Mammary epithelial cell (primary cell): ENCODE measurements at regions of chr4 and their contacts with region 1.

Region 1: GRCh38 chr4:150297861-150298474 is 219.7 kb downstream of the DCLK2 start:
- DNase-seq: peak; percentile 43
- H3K4me3 ChIP-seq: no peak overlapping the region
- H3K27ac ChIP-seq: no peak overlapping the region
- H3K4me1 ChIP-seq: peaks cover 8% of the 10 kb centered on the region
- H3K27me3 ChIP-seq: no peaks in the 10 kb centered on the region
- CTCF ChIP-seq: peak; percentile 45 to 71

Region 2: DNA sequence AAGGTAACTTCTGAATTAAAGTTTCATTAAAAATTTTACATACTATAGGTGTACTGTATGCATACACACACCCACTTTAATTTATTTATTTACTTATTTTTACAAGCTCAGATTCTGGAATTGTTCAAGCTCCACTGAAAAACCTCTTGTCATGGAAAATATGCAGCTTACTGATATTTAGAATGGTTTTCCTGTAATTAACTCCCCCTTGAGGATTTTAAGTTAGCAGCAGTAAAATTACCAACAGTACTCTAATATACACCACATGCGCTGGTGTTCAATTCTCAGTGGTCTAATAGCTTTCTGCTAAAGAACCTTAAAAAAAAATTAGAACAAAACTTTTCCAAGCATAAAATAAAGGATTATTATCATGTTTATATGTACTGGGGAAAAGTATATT is 296.0 kb after region 1 on chr4:
- CTCF ChIA-PET with region 1: interaction called, 6 read pairs
- dilution Hi-C with region 1: no loop called
- in situ Hi-C with region 1: no loop called
- intact Hi-C with region 1: loop called (anchors 1 kb)
- DNase-seq: no peak
- H3K4me3 ChIP-seq: no peak overlapping the region
- H3K27ac ChIP-seq: no peak overlapping the region
- H3K4me1 ChIP-seq: no peaks in the 10 kb centered on the region
- H3K27me3 ChIP-seq: no peaks in the 10 kb centered on the region
- CTCF ChIP-seq: no peak

Region 3: GRCh38 chr4:150679765-150680343 is 381.9 kb after region 1 on chr4:
- CTCF ChIA-PET with region 1: no interaction called
- dilution Hi-C with region 1: no loop called
- in situ Hi-C with region 1: no loop called
- intact Hi-C with region 1: loop called (anchors 10 kb)
- DNase-seq: no peak
- H3K4me3 ChIP-seq: peak overlapping the region in 2 of 3 experiments; percentile 45 to 69
- H3K27ac ChIP-seq: peak overlapping the region; percentile 75
- H3K4me1 ChIP-seq: peaks cover 21% of the 10 kb centered on the region
- H3K27me3 ChIP-seq: no peaks in the 10 kb centered on the region
- CTCF ChIP-seq: no peak

Region 4: DNA sequence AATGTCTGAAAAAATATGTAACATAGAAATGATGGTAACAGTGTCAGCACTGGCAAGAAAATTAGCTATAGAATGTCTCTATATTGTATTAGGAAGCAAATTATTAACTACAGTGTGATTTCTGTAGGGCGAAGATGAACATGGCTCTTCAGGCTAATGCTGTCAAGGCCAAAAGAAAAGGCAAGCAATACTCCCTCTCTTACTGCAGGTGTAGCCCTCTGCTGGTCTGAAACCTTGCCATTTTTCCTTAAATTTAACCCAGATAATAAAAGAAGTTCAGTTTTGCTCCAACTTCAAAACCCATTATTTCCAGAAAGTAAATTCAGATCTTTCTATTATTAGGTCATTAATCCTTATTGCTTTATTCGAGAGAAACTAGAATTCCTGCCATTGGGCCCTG is 501.2 kb after region 1 on chr4:
- CTCF ChIA-PET with region 1: no interaction called
- dilution Hi-C with region 1: no loop called
- in situ Hi-C with region 1: no loop called
- intact Hi-C with region 1: loop called (anchors 1 kb)
- DNase-seq: no peak
- H3K4me3 ChIP-seq: no peak overlapping the region
- H3K27ac ChIP-seq: no peak overlapping the region
- H3K4me1 ChIP-seq: no peaks in the 10 kb centered on the region
- H3K27me3 ChIP-seq: no peaks in the 10 kb centered on the region
- CTCF ChIP-seq: peak in 1 of 2 donors; percentile 23

Region 5: GRCh38 chr4:150960818-150961217 is 662.9 kb after region 1 on chr4:
- CTCF ChIA-PET with region 1: no interaction called
- dilution Hi-C with region 1: no loop called
- in situ Hi-C with region 1: no loop called
- intact Hi-C with region 1: loop called (anchors 5 kb)
- DNase-seq: peak; percentile 41
- H3K4me3 ChIP-seq: no peak overlapping the region
- H3K27ac ChIP-seq: no peak overlapping the region
- H3K4me1 ChIP-seq: no peaks in the 10 kb centered on the region
- H3K27me3 ChIP-seq: no peaks in the 10 kb centered on the region
- CTCF ChIP-seq: peak; percentile 74 to 90

Region 6: GRCh38 chr4:151087467-151087866 is 789.5 kb after region 1 on chr4:
- CTCF ChIA-PET with region 1: no interaction called
- dilution Hi-C with region 1: no loop called
- in situ Hi-C with region 1: no loop called
- intact Hi-C with region 1: loop called (anchors 10 kb)
- DNase-seq: no peak
- H3K4me3 ChIP-seq: no peak overlapping the region
- H3K27ac ChIP-seq: no peak overlapping the region
- H3K4me1 ChIP-seq: no peaks in the 10 kb centered on the region
- H3K27me3 ChIP-seq: no peaks in the 10 kb centered on the region
- CTCF ChIP-seq: no peak